Panc1 (cell line): ENCODE measurements at regions of chr15 and their contacts with region 1.

Region 1: GRCh38 chr15:69367231-69367630 is 46.9 kb upstream of the KIF23 start:
- DNase-seq: no peak
- ATAC-seq: no peak
- H3K4me3 ChIP-seq: no peak overlapping the region
- H3K27ac ChIP-seq: no peak overlapping the region
- H3K4me1 ChIP-seq: no peaks in the 10 kb centered on the region
- H3K27me3 ChIP-seq: no peaks in the 10 kb centered on the region
- CTCF ChIP-seq: no peak

Region 2: DNA sequence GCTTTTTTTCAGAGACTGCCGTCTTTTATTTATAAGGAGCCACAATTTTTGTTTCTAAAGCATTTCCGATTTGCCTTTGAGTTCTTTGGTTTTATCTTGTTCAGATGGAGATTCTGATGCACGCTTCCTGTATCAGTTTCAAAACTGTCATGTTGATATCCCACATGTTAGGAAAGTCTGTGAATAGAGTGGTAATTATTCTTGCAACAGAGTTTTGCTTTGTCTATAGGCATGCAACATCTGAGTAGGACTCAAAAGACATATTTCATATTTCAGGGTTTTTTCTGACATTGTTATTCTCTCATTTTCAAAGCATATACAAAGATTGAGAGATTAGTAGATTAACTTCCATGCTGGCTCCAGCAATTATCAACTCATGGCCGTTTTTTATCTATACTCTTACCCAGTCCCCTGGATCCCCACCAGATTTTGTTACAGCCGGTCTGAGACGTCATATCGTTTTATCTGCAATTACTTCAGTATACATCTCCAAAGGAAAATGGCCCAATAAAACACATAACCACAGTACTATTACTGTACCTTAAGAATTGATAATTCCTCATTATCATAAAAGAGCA is 46.2 kb before region 1 on chr15:
- CTCF ChIA-PET with region 1: no interaction called
- POLR2A ChIA-PET with region 1: interaction called, 10 read pairs
- in situ Hi-C with region 1: no loop called
- intact Hi-C with region 1: no loop called
- DNase-seq: no peak
- ATAC-seq: no peak
- H3K4me3 ChIP-seq: no peak overlapping the region
- H3K27ac ChIP-seq: no peak overlapping the region
- H3K4me1 ChIP-seq: no peaks in the 10 kb centered on the region
- H3K27me3 ChIP-seq: no peaks in the 10 kb centered on the region
- CTCF ChIP-seq: no peak

Region 3: DNA sequence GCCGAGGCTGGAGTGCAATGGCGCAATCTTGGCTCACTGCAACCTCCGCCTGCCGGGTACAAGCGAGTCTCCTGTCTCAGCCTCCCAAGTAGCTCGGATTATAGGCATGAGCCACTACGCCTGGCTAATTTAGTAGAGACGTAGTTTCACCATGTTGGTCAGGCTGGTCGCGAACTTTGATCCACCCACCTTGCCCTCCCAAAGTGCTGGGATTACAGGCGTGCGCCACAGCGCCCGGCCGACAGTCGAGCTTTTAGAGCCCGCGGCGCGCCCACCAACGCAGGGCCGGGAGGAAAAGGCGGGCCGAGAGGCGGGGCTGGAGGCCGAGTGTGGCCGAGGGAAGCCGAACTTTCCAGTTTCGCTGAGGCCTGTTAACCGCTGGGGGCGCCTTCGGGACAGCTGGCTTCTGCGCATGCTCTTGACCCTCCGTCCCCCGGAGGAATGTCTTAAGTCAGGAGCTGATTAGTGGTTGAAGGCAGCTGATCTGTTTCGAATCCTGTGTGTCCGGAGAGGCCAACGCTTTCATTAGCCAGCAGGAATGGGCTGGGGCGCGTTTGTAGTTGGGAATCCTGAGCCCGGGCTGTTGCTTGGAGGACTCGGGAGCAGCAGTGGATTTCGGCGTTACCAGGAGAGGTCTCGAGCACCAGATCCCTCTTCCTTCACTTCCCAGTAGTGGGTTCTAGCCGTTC is 95.4 kb after region 1 on chr15:
- CTCF ChIA-PET with region 1: no interaction called
- POLR2A ChIA-PET with region 1: no interaction called
- in situ Hi-C with region 1: no loop called
- intact Hi-C with region 1: no loop called
- DNase-seq: peak; percentile 93
- ATAC-seq: peak; percentile 94
- H3K4me3 ChIP-seq: peak overlapping the region; percentile 54 to 62
- H3K27ac ChIP-seq: peak overlapping the region; percentile 98
- H3K4me1 ChIP-seq: peaks cover 27% of the 10 kb centered on the region
- H3K27me3 ChIP-seq: no peaks in the 10 kb centered on the region
- CTCF ChIP-seq: peak; percentile 96